ENCODE measurements at regions of chr19 and their contacts with region 1.

Region 1: GRCh38 chr19:23395041-23395721 is at the start of gene ZNF91:
- DNase-seq: peak; percentile 73 to 96 (median 92)
- ATAC-seq: peak; percentile 98
- H3K4me3 ChIP-seq: peak within 1 kb of the TSS; percentile 96
- H3K4me3 Mint-ChIP-seq: peak within 1 kb of the TSS; percentile 96 to 99 (median 98)
- H3K27ac ChIP-seq: peak within 1 kb of the TSS; percentile 96
- H3K27ac Mint-ChIP-seq: peak within 1 kb of the TSS; percentile 94 to 99 (median 98)
- H3K4me1 ChIP-seq: peaks cover 12% of the 10 kb centered on the region in 2 donors
- H3K4me1 Mint-ChIP-seq: peaks cover 4 to 43% (median 37%) of the 10 kb centered on the region in 7 donors
- H3K27me3 ChIP-seq: no peaks in the 10 kb centered on the region
- H3K27me3 Mint-ChIP-seq: no peaks in the 10 kb centered on the region
- total RNA-seq, gene ZNF91: 40.5 to 165 (median 90.6) TPM

Region 2: GRCh38 chr19:22634450-22634827 is 760.7 kb before region 1 on chr19:
- CTCF ChIA-PET with region 1: no interaction called
- POLR2A ChIA-PET with region 1: no interaction called
- intact Hi-C with region 1: loop called in 1 of 2 experiments (anchors 10 kb)
- DNase-seq: no peak
- ATAC-seq: no peak
- H3K4me3 ChIP-seq: peak overlapping the region; percentile 63
- H3K4me3 Mint-ChIP-seq: peak overlapping the region; percentile 70 to 98 (median 93)
- H3K27ac ChIP-seq: peak overlapping the region; percentile 55
- H3K27ac Mint-ChIP-seq: peak overlapping the region in 8 of 9 donors; percentile 59 to 95 (median 82)
- H3K4me1 ChIP-seq: no peaks in the 10 kb centered on the region
- H3K4me1 Mint-ChIP-seq: peaks cover 0 to 16% (median 5%) of the 10 kb centered on the region in 7 donors
- H3K27me3 ChIP-seq: no peaks in the 10 kb centered on the region
- H3K27me3 Mint-ChIP-seq: no peaks in the 10 kb centered on the region

Region 3: GRCh38 chr19:23249911-23250649 is 145.1 kb before region 1 on chr19 and contains the start of gene ZNF724:
- CTCF ChIA-PET with region 1: interaction called, 3 read pairs
- POLR2A ChIA-PET with region 1: interaction called, 9 read pairs
- intact Hi-C with region 1: loop called (anchors 1 kb)
- DNase-seq: peak; percentile 66 to 91 (median 88)
- ATAC-seq: peak; percentile 100
- H3K4me3 ChIP-seq: peak within 1 kb of the TSS; percentile 84
- H3K4me3 Mint-ChIP-seq: peak within 1 kb of the TSS; percentile 95 to 99 (median 96)
- H3K27ac ChIP-seq: peak within 1 kb of the TSS; percentile 72
- H3K27ac Mint-ChIP-seq: peak within 1 kb of the TSS; percentile 61 to 96 (median 89)
- H3K4me1 ChIP-seq: peaks cover 0 to 6% of the 10 kb centered on the region in 2 donors
- H3K4me1 Mint-ChIP-seq: peaks cover 6 to 22% (median 10%) of the 10 kb centered on the region in 7 donors
- H3K27me3 ChIP-seq: no peaks in the 10 kb centered on the region
- H3K27me3 Mint-ChIP-seq: no peaks in the 10 kb centered on the region
- total RNA-seq, gene ZNF724: 2.9 to 11.3 (median 6.8) TPM

Region 4: DNA sequence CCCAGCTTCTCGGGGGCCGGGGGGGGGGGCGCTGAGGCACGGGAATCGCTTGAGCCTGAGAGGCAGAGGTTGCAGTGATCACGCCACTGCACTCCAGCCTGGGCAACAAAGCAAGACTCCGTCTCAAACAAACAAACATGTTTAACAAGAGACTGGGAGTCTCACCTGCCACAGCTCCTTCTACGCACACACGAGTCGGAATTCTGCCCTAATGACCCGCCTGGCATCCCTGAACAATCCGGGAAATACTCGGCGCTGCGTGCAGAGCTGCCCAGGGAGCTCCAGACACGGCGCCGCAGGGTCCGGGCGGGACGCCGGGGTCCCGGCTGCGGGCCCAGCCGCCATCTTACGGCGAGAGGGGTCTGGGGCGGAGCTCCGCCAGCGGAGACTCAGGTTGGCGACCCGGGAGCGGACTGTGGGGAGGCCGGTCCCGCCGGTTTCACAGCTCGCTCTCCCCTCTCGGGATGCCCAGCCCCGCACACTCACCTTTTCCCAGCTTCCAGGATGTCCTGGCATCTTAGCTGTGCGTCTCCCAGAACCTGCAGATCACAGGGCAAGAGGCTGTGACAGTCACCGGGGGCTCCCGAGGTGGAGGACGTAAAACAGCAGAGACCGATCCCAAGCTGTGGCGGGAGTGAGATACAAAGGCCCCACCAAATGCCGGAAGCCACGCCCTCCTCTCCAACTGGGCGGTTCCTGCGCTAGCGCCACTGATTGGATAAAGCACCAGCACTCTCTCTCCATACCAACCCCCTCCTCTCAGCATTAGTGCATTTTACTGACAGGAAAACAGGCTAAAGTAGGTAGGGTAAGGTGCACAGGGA is 121.4 kb before region 1 on chr19:
- CTCF ChIA-PET with region 1: interaction called, 4 read pairs
- POLR2A ChIA-PET with region 1: interaction called, 29 read pairs
- intact Hi-C with region 1: loop called (anchors 1 kb)
- DNase-seq: peak; percentile 76 to 93 (median 91)
- ATAC-seq: peak; percentile 100
- H3K4me3 ChIP-seq: peak overlapping the region; percentile 94
- H3K4me3 Mint-ChIP-seq: peak overlapping the region; percentile 94 to 99 (median 98)
- H3K27ac ChIP-seq: peak overlapping the region; percentile 95
- H3K27ac Mint-ChIP-seq: peak overlapping the region; percentile 92 to 98 (median 96)
- H3K4me1 ChIP-seq: peaks cover 0 to 7% of the 10 kb centered on the region in 2 donors
- H3K4me1 Mint-ChIP-seq: peaks cover 15 to 47% (median 30%) of the 10 kb centered on the region in 7 donors
- H3K27me3 ChIP-seq: no peaks in the 10 kb centered on the region
- H3K27me3 Mint-ChIP-seq: no peaks in the 10 kb centered on the region

Region 5: DNA sequence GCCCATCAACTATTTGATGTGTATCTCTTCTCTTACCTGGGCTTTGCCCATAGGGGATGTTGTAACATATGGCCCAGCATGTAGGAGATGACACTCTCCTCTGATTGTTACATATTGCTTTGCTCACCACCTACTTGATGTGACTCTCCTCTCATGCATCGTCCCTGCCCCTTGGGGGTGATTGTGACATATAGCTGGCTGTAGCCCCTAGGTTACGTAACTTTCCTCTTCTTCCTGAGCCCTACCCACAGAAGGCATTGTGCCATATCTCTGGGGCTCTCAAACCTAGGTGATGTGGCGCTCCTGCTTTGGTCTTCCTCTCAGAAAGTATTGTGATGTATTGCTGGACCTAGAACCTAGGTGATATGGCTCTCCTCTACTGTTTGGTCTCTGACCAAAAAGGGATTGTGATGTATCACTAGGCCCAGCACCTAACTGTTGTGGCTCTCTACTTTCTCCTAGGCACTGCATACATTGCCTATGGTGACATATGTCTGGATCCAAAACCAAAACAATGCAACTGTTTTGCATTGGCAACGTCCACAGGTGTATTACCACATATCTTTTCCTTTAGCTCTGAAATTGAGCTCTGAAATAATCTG is 73.1 kb before region 1 on chr19:
- CTCF ChIA-PET with region 1: no interaction called
- POLR2A ChIA-PET with region 1: no interaction called
- intact Hi-C with region 1: no loop called
- DNase-seq: no peak
- ATAC-seq: no peak
- H3K4me3 ChIP-seq: no peak overlapping the region
- H3K4me3 Mint-ChIP-seq: no peak overlapping the region
- H3K27ac ChIP-seq: no peak overlapping the region
- H3K27ac Mint-ChIP-seq: no peak overlapping the region
- H3K4me1 ChIP-seq: no peaks in the 10 kb centered on the region
- H3K4me1 Mint-ChIP-seq: peaks cover 0 to 16% (median 0%) of the 10 kb centered on the region in 7 donors
- H3K27me3 ChIP-seq: no peaks in the 10 kb centered on the region
- H3K27me3 Mint-ChIP-seq: no peaks in the 10 kb centered on the region

Region 6: GRCh38 chr19:23409392-23410048 is 14.3 kb after region 1 on chr19:
- CTCF ChIA-PET with region 1: no interaction called
- POLR2A ChIA-PET with region 1: no interaction called
- intact Hi-C with region 1: no loop called
- DNase-seq: no peak
- ATAC-seq: no peak
- H3K4me3 ChIP-seq: no peak overlapping the region
- H3K4me3 Mint-ChIP-seq: no peak overlapping the region
- H3K27ac ChIP-seq: no peak overlapping the region
- H3K27ac Mint-ChIP-seq: peak overlapping the region in 1 of 9 donors; percentile 77
- H3K4me1 ChIP-seq: no peaks in the 10 kb centered on the region
- H3K4me1 Mint-ChIP-seq: peaks cover 0 to 2% (median 0%) of the 10 kb centered on the region in 7 donors
- H3K27me3 ChIP-seq: no peaks in the 10 kb centered on the region
- H3K27me3 Mint-ChIP-seq: peaks cover 0 to 8% (median 7%) of the 10 kb centered on the region in 5 donors

Region 7: GRCh38 chr19:23673132-23673531 is 278.0 kb after region 1 on chr19:
- CTCF ChIA-PET with region 1: no interaction called
- POLR2A ChIA-PET with region 1: no interaction called
- intact Hi-C with region 1: no loop called
- DNase-seq: no peak
- ATAC-seq: no peak
- H3K4me3 ChIP-seq: no peak overlapping the region
- H3K4me3 Mint-ChIP-seq: peak overlapping the region in 2 of 10 donors; percentile 4 to 25
- H3K27ac ChIP-seq: no peak overlapping the region
- H3K27ac Mint-ChIP-seq: no peak overlapping the region
- H3K4me1 ChIP-seq: peaks cover 0 to 8% of the 10 kb centered on the region in 2 donors
- H3K4me1 Mint-ChIP-seq: peaks cover 0 to 42% (median 30%) of the 10 kb centered on the region in 7 donors
- H3K27me3 ChIP-seq: no peaks in the 10 kb centered on the region
- H3K27me3 Mint-ChIP-seq: no peaks in the 10 kb centered on the region

Measured in naive thymus-derived CD4-positive, alpha-beta T cell (primary cell).